HCT116 (cell line): ENCODE measurements at regions of chrX and their contacts with region 1.

Region 1: DNA sequence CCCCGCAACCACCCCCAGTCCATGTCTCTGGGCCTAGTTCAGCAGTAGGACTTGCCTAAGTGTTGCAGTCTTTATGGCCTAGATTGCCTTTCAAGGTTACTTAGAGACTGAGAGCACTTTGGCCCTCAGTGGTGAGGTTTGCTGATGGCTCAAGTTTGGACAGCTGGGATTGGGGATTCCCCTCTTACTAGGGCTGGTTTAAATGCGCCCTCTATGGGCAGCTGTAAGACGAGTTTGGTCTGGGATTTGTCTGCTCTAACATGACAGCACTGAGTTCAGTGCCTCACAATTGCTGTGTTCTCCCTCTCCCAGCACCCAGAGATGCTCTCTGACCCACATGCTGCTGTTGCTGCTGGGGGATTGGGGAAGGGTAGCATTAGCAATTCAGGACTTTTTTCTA is 23.1 kb downstream of the DACH2 start:
- DNase-seq: no peak
- ATAC-seq: peak; percentile 59; the same call in 1 of the 2 replicates
- H3K4me3 ChIP-seq: no peak overlapping the region
- H3K27ac ChIP-seq: no peak overlapping the region
- H3K4me1 ChIP-seq: no peaks in the 10 kb centered on the region
- H3K27me3 ChIP-seq: no peaks in the 10 kb centered on the region
- CTCF ChIP-seq: peak in 2 of 3 experiments; percentile 31 to 39; a peak in 3 of 6 replicates
- POLR2A ChIP-seq: no peak
- RAD21 ChIP-seq: peak; percentile 26

Region 2: GRCh38 chrX:85444613-85445012 is 726.8 kb before region 1 on chrX:
- CTCF ChIA-PET with region 1: no interaction called
- POLR2A ChIA-PET with region 1: no interaction called
- RAD21 ChIA-PET with region 1: no interaction called
- intact Hi-C with region 1: no loop called
- DNase-seq: no peak
- ATAC-seq: no peak
- H3K4me3 ChIP-seq: no peak overlapping the region
- H3K27ac ChIP-seq: no peak overlapping the region
- H3K4me1 ChIP-seq: no peaks in the 10 kb centered on the region
- H3K27me3 ChIP-seq: no peaks in the 10 kb centered on the region
- CTCF ChIP-seq: no peak
- POLR2A ChIP-seq: no peak
- RAD21 ChIP-seq: no peak

Region 3: DNA sequence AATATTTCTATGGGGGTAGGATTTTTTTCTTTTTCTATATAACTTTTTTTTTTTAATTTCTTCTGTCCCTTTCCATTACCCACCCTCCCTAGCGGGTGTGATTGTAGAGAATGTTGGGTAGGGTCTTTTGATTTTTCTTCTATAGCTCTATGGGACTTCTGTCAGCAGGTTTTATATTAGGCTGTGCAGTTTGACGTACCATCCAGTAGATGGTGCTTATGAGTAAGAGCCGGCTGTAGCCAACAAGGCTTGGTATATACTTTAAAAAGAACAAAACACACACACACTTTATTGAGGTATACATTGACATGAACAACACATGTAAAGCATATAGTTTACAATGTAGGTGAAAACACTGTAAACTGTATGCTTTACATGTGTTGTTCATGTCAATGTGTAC is 544.0 kb before region 1 on chrX:
- CTCF ChIA-PET with region 1: no interaction called
- POLR2A ChIA-PET with region 1: no interaction called
- RAD21 ChIA-PET with region 1: no interaction called
- intact Hi-C with region 1: loop called (anchors 5 kb)
- DNase-seq: no peak
- ATAC-seq: no peak
- H3K4me3 ChIP-seq: no peak overlapping the region
- H3K27ac ChIP-seq: no peak overlapping the region
- H3K4me1 ChIP-seq: no peaks in the 10 kb centered on the region
- H3K27me3 ChIP-seq: no peaks in the 10 kb centered on the region
- CTCF ChIP-seq: peak in 2 of 3 experiments; percentile 47 to 54; a peak in 4 of 6 replicates
- POLR2A ChIP-seq: no peak
- RAD21 ChIP-seq: no peak

Region 4: DNA sequence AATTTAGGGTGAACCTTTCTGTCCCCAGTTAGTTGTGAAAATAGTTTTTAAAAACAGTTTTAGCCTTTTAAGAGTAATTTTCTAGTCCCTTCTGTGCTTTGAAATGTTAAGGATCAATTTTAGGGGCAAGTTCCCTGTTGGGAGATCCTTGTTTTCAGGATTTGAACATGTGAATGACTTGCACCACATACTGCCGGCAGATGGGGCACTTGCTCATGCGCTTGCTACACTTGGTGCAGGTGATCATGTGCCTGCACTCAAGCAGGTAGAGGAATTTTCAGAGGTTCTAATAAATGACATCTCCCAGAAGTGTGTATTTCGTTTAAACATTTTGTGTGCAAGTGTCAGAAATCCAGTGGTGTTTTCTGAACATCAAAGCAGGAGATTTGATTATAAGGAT is 319.9 kb before region 1 on chrX:
- CTCF ChIA-PET with region 1: no interaction called
- POLR2A ChIA-PET with region 1: no interaction called
- RAD21 ChIA-PET with region 1: no interaction called
- intact Hi-C with region 1: loop called (anchors 5 kb)
- DNase-seq: peak; percentile 8
- ATAC-seq: peak; percentile 63
- H3K4me3 ChIP-seq: no peak overlapping the region
- H3K27ac ChIP-seq: no peak overlapping the region
- H3K4me1 ChIP-seq: no peaks in the 10 kb centered on the region
- H3K27me3 ChIP-seq: no peaks in the 10 kb centered on the region
- CTCF ChIP-seq: peak; percentile 43 to 56 (median 54); a peak in 5 of 6 replicates
- POLR2A ChIP-seq: no peak
- RAD21 ChIP-seq: peak; percentile 55